CD4-positive, alpha-beta memory T cell (primary cell): ENCODE measurements at regions of chr1 and their contacts with region 1.

Region 1: GRCh38 chr1:212062832-212063438 is 27.4 kb downstream of the DTL start:
- DNase-seq: peak in 4 of 5 donors; percentile 37 to 45 (median 38)
- H3K4me3 ChIP-seq: no peak overlapping the region
- H3K4me3 Mint-ChIP-seq: no peak overlapping the region
- H3K27ac ChIP-seq: no peak overlapping the region
- H3K27ac Mint-ChIP-seq: no peak overlapping the region
- H3K4me1 ChIP-seq: no peaks in the 10 kb centered on the region
- H3K4me1 Mint-ChIP-seq: no peaks in the 10 kb centered on the region
- H3K27me3 ChIP-seq: no peaks in the 10 kb centered on the region
- H3K27me3 Mint-ChIP-seq: no peaks in the 10 kb centered on the region

Region 2: GRCh38 chr1:211127166-211127565 is 935.8 kb before region 1 on chr1:
- CTCF ChIA-PET with region 1: no interaction called
- POLR2A ChIA-PET with region 1: no interaction called
- intact Hi-C with region 1: no loop called
- DNase-seq: no peak
- H3K4me3 ChIP-seq: no peak overlapping the region
- H3K4me3 Mint-ChIP-seq: no peak overlapping the region
- H3K27ac ChIP-seq: no peak overlapping the region
- H3K27ac Mint-ChIP-seq: no peak overlapping the region
- H3K4me1 ChIP-seq: no peaks in the 10 kb centered on the region
- H3K4me1 Mint-ChIP-seq: no peaks in the 10 kb centered on the region
- H3K27me3 ChIP-seq: peaks cover 17% of the 10 kb centered on the region
- H3K27me3 Mint-ChIP-seq: peaks cover 27 to 36% of the 10 kb centered on the region in 2 donors

Region 3: DNA sequence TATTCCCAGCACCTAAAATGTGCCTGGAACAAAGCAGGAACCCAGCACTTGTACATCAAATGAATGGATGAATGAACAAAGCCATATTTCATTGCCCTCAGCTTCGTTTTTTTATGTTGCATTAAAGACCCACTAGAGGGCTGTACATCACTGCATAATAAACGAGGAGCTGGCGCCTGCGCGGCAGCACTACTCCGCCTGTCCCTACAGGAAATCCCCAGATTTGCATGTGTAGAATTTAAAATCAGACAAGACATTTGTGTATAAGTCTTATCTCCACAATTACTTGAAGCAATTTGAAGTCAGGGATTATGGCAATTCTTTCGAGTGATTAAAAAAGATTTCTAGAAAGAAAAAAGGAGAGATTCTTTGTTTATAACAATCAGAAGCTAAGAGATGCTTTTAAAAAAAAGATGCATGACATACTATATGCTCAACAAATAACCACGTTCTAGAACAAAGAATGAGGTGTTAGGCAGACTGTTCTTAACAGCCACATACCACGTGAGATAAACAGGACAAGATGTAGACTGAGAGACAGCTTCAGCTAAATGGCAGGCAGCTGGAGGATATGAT is 382.1 kb before region 1 on chr1:
- CTCF ChIA-PET with region 1: interaction called, 31 read pairs
- POLR2A ChIA-PET with region 1: no interaction called
- intact Hi-C with region 1: loop called (anchors 2 kb)
- DNase-seq: peak; percentile 76 to 83 (median 82)
- H3K4me3 ChIP-seq: no peak overlapping the region
- H3K4me3 Mint-ChIP-seq: peak overlapping the region in 4 of 8 donors; percentile 0 to 56 (median 17)
- H3K27ac ChIP-seq: peak overlapping the region; percentile 61
- H3K27ac Mint-ChIP-seq: peak overlapping the region; percentile 77 to 98 (median 92)
- H3K4me1 ChIP-seq: peaks cover 15% of the 10 kb centered on the region
- H3K4me1 Mint-ChIP-seq: peaks cover 9 to 26% (median 12%) of the 10 kb centered on the region in 4 donors
- H3K27me3 ChIP-seq: no peaks in the 10 kb centered on the region
- H3K27me3 Mint-ChIP-seq: no peaks in the 10 kb centered on the region

Region 4: DNA sequence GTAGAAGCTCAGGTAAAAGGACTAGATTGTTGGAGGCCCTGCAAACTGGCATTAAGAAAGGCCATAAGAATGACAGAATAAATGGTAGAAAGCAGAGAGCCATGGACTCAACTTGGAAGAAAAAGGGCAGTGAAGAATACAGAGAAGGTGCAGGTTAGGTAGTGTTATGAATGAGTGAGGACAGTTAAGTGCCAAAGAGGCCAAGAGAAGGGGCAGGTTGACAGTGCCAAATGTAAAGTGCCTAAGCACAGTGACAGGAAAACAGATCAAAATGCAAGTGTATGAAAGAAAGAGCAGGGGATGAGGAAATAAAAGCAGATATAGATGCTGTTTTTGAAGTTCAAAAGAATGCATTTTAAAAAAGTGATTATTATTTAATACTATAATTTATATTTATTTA is 71.2 kb before region 1 on chr1:
- CTCF ChIA-PET with region 1: no interaction called
- POLR2A ChIA-PET with region 1: no interaction called
- intact Hi-C with region 1: no loop called
- DNase-seq: no peak
- H3K4me3 ChIP-seq: no peak overlapping the region
- H3K4me3 Mint-ChIP-seq: no peak overlapping the region
- H3K27ac ChIP-seq: no peak overlapping the region
- H3K27ac Mint-ChIP-seq: peak overlapping the region in 1 of 7 donors; percentile 60
- H3K4me1 ChIP-seq: no peaks in the 10 kb centered on the region
- H3K4me1 Mint-ChIP-seq: peaks cover 0 to 3% (median under 1%) of the 10 kb centered on the region in 4 donors
- H3K27me3 ChIP-seq: no peaks in the 10 kb centered on the region
- H3K27me3 Mint-ChIP-seq: no peaks in the 10 kb centered on the region

Region 5: DNA sequence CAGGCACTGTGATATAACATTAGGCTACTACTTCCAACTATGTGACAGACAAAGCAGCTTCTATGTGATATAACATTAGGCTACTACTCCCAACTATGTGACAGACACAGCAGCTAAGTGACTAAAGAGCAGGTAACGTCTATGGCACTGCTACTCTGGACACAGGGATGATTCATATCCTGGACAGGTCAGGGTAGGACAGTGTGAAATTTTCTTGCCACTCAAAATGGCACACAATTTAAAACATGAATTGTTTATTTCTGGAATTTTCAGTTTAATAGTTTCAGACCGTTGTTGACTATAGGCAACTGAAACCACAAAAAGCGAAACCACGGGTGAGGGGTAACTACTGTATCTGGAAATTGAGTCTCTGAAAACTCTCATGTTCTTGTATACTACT is 22.3 kb before region 1 on chr1:
- CTCF ChIA-PET with region 1: interaction called, 18 read pairs
- POLR2A ChIA-PET with region 1: interaction called, 5 read pairs
- intact Hi-C with region 1: no loop called
- DNase-seq: peak in 1 of 5 donors; percentile 10
- H3K4me3 ChIP-seq: peak overlapping the region; percentile 1 to 24
- H3K4me3 Mint-ChIP-seq: peak overlapping the region; percentile 46 to 82 (median 70)
- H3K27ac ChIP-seq: peak overlapping the region; percentile 14
- H3K27ac Mint-ChIP-seq: peak overlapping the region in 2 of 7 donors; percentile 78 to 86
- H3K4me1 ChIP-seq: peaks cover 23% of the 10 kb centered on the region
- H3K4me1 Mint-ChIP-seq: peaks cover 16 to 36% (median 19%) of the 10 kb centered on the region in 4 donors
- H3K27me3 ChIP-seq: no peaks in the 10 kb centered on the region
- H3K27me3 Mint-ChIP-seq: no peaks in the 10 kb centered on the region

Region 6: GRCh38 chr1:212045981-212046380 is 17.0 kb before region 1 on chr1:
- CTCF ChIA-PET with region 1: interaction called, 20 read pairs
- POLR2A ChIA-PET with region 1: no interaction called
- intact Hi-C with region 1: no loop called
- DNase-seq: no peak
- H3K4me3 ChIP-seq: no peak overlapping the region
- H3K4me3 Mint-ChIP-seq: no peak overlapping the region
- H3K27ac ChIP-seq: no peak overlapping the region
- H3K27ac Mint-ChIP-seq: no peak overlapping the region
- H3K4me1 ChIP-seq: peaks cover 2% of the 10 kb centered on the region
- H3K4me1 Mint-ChIP-seq: peaks cover 1 to 3% (median 2%) of the 10 kb centered on the region in 4 donors
- H3K27me3 ChIP-seq: no peaks in the 10 kb centered on the region
- H3K27me3 Mint-ChIP-seq: no peaks in the 10 kb centered on the region

Region 7: DNA sequence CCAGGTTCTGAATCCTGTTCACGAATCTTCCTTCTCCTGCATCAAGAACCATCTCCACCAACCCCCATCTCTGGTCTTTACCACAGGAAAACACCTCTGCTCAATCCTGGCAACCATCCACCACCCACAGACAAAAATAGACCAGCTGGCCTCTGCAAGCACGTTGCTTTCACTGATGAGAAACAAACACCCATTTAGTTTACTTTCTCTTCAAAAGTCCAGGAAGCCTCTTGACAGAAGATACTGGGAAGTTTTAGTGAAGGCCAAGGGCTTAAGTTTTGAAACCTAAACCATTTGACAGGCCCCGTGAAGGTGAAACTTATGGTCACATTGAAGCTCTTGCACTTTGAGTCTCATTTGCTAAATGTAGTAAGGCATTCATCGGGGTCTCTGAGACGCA is 99.7 kb after region 1 on chr1:
- CTCF ChIA-PET with region 1: no interaction called
- POLR2A ChIA-PET with region 1: no interaction called
- intact Hi-C with region 1: no loop called
- DNase-seq: peak in 4 of 5 donors; percentile 9 to 33 (median 32)
- H3K4me3 ChIP-seq: no peak overlapping the region
- H3K4me3 Mint-ChIP-seq: peak overlapping the region; percentile 1 to 69 (median 48)
- H3K27ac ChIP-seq: no peak overlapping the region
- H3K27ac Mint-ChIP-seq: peak overlapping the region in 2 of 7 donors; percentile 24 to 63
- H3K4me1 ChIP-seq: peaks cover 40% of the 10 kb centered on the region
- H3K4me1 Mint-ChIP-seq: peaks cover 20 to 41% (median 31%) of the 10 kb centered on the region in 4 donors
- H3K27me3 ChIP-seq: no peaks in the 10 kb centered on the region
- H3K27me3 Mint-ChIP-seq: no peaks in the 10 kb centered on the region

Region 8: DNA sequence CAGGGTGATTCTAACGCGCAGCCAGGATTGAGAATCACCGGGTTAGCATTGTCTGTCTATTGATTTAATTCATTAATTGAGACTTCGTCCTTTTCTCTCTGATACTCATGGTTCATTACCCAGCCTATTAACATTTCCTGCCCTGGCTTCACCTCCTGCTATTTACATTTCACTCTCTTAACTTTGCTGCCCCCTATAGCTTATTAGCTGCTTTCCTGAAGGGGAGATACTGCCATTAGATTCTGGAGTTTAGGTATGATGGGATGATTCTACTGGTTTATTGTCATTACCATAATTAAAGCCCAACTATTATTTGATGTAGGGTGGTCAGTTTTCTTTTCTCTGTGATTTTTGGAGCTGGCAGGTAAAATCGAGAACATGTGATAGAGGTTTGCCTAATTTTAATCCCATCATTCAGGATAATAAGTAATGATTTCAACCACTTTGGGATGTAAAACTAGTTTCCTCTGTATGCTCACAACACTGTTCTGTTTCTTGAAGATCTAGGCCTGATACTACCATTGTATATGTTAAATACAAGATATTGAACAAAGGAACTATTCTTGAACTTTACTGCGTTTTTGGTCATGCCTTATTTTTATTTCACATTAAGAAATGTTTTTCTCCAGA is 228.7 kb after region 1 on chr1:
- CTCF ChIA-PET with region 1: interaction called, 34 read pairs
- POLR2A ChIA-PET with region 1: interaction called, 14 read pairs
- intact Hi-C with region 1: loop called (anchors 2 kb)
- DNase-seq: peak in 4 of 5 donors; percentile 57 to 70 (median 64)
- H3K4me3 ChIP-seq: no peak overlapping the region
- H3K4me3 Mint-ChIP-seq: peak overlapping the region; percentile 27 to 70 (median 60)
- H3K27ac ChIP-seq: no peak overlapping the region
- H3K27ac Mint-ChIP-seq: peak overlapping the region in 4 of 7 donors; percentile 0 to 54 (median 16)
- H3K4me1 ChIP-seq: peaks cover 87% of the 10 kb centered on the region
- H3K4me1 Mint-ChIP-seq: peaks cover 66 to 91% (median 81%) of the 10 kb centered on the region in 4 donors
- H3K27me3 ChIP-seq: no peaks in the 10 kb centered on the region
- H3K27me3 Mint-ChIP-seq: no peaks in the 10 kb centered on the region

Region 9: GRCh38 chr1:212368073-212368484 is 305.1 kb after region 1 on chr1:
- CTCF ChIA-PET with region 1: interaction called, 51 read pairs
- POLR2A ChIA-PET with region 1: no interaction called
- intact Hi-C with region 1: loop called (anchors 1 kb)
- DNase-seq: peak; percentile 53 to 68 (median 57)
- H3K4me3 ChIP-seq: no peak overlapping the region
- H3K4me3 Mint-ChIP-seq: no peak overlapping the region
- H3K27ac ChIP-seq: no peak overlapping the region
- H3K27ac Mint-ChIP-seq: peak overlapping the region in 3 of 7 donors; percentile 10 to 55 (median 41)
- H3K4me1 ChIP-seq: no peaks in the 10 kb centered on the region
- H3K4me1 Mint-ChIP-seq: peaks cover 0 to 7% (median 1%) of the 10 kb centered on the region in 4 donors
- H3K27me3 ChIP-seq: no peaks in the 10 kb centered on the region
- H3K27me3 Mint-ChIP-seq: no peaks in the 10 kb centered on the region